ENCODE measurements at regions of chr1 and their contacts with region 1.

Region 1: DNA sequence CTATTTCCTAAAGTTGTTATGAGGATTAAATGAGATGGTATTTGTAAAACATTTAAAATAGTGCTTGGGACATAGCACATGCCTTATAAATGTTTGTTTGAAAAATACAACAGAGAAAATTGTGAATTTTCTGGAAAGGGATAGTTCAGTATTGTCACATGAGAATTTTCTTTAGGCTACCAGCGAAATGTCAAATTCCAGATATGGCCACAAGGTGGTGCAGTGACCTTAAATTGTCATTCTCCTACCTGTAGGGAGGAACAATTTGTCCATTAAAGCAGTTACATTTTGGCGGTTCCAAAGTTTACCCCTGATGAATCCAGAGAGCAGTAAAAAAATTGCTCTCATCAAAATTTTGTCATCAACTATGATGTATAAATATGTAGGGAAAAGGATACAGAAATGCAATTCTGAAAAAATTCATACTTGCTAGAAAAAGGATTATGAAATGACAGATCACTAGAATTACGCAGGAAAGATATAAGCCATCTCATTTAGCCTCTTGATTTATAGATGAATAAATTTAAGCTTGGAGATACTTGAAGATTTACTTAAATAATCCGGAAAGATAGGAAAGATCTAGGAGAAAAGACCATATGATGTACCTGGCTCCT is 50.2 kb upstream of the TSHB start:
- DNase-seq: peak; percentile 30 to 82 (median 55)
- H3K4me3 ChIP-seq: no peak overlapping the region
- H3K27ac ChIP-seq: no peak overlapping the region
- H3K4me1 ChIP-seq: no peaks in the 10 kb centered on the region
- H3K27me3 ChIP-seq: peaks cover 5% of the 10 kb centered on the region
- CTCF ChIP-seq: peak; percentile 70 to 89 (median 77)
- POLR2A ChIP-seq: no peak

Region 2: DNA sequence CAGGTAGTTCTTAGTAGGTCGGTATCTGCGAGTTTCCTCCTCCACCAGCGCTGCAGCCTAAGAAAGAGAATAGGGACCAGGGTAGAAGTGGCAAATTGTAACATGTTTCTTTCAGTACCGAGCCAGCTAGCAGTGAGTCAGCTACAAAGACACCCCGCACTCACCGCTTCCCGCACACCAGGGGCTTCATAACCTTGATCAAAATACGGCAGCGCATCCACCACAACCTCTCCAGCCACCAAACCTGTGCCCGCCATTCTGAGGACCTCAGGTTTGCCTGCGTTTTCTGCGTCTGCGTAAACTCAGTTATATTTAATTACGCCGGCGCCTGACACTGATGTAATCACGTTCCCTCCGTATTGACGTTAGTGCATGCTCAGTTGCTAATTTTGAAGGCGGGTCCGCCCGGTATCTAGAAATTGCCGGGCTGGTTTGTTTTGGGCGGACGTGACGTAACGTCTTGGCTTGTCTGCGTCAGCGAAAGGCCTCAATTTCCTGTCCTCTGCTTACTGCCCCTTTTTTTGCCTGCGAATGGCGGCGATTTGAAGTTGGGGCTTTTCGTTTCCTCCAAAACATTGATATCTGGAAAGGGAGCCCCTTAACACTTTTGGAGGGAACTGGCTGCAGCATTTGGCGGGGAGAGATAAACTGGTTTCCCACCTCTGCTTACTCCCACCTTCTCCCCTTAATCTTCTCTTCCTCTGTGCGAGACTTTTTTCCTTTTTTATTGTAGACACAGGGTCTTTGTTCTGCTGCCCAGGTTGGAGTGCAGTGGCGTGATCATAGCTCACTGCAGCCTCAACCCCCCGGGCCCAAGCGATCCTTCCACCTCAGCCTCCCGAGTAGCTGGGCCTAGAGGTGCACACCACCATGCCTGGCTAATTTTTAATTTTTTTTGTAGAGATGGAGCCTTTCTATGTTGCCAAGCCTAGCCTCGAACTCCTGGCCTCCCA is 397.8 kb before region 1 on chr1 and contains the start of gene BCAS2:
- intact Hi-C with region 1: no loop called
- DNase-seq: peak; percentile 96 to 100 (median 99)
- H3K4me3 ChIP-seq: peak within 1 kb of the TSS; percentile 17 to 87 (median 54)
- H3K27ac ChIP-seq: peak within 1 kb of the TSS; percentile 30 to 92 (median 87)
- H3K4me1 ChIP-seq: peaks cover 5 to 22% of the 10 kb centered on the region in 2 donors
- H3K27me3 ChIP-seq: no peaks in the 10 kb centered on the region
- CTCF ChIP-seq: no peak
- POLR2A ChIP-seq: peak; percentile 89 to 98
- total RNA-seq, gene BCAS2: 15.5 to 65.6 (median 34.9) TPM

Region 3: DNA sequence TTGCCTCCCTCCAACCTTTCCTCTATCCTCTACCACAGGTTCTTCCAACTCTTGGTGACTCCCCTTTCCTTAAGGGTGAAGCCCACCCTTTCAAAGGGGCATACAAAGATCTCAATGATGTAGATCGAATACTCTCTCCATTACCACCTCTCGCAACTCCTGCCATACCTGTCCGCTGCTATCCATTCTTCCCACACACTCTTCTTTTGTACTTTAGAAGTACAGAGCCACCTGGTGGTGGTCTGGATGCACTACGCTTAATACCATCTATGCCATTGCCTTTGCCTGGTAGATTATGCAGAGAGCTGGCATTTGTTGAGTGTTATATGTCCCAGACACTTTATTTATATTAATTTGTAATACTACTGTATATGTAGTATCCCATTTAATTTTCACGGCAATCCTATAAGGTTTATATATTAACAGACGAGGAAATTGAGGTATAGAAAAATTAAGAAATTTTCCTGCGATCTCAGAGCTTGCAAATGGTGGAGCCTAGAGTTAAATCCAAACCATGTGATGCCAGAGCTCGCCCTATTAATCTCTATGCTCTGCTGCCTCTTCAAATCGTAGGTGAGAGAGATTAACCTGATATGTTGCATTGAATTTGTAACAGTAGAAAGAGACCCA is 73.2 kb after region 1 on chr1:
- intact Hi-C with region 1: loop called in 1 of 2 experiments (anchors 5 kb)
- DNase-seq: peak; percentile 35 to 86 (median 67)
- H3K4me3 ChIP-seq: no peak overlapping the region
- H3K27ac ChIP-seq: no peak overlapping the region
- H3K4me1 ChIP-seq: no peaks in the 10 kb centered on the region
- H3K27me3 ChIP-seq: no peaks in the 10 kb centered on the region
- CTCF ChIP-seq: peak; percentile 60 to 81 (median 72)
- POLR2A ChIP-seq: no peak

Region 4: GRCh38 chr1:115112496-115113375 is 133.4 kb after region 1 on chr1:
- intact Hi-C with region 1: loop called (anchors 5 kb)
- DNase-seq: peak; percentile 21 to 61 (median 31)
- H3K4me3 ChIP-seq: no peak overlapping the region
- H3K27ac ChIP-seq: no peak overlapping the region
- H3K4me1 ChIP-seq: no peaks in the 10 kb centered on the region
- H3K27me3 ChIP-seq: no peaks in the 10 kb centered on the region
- CTCF ChIP-seq: peak; percentile 59 to 92 (median 77)
- POLR2A ChIP-seq: no peak